Activated B cell treated with CpG ODN at 0.5 μM for 24 hours (primary cell): ENCODE measurements at regions of chr4 and their contacts with region 1.

Region 1: GRCh38 chr4:145936142-145936996 is 2.3 kb downstream of the ZNF827 start:
- DNase-seq: peak; percentile 57
- ATAC-seq: peak; percentile 49
- H3K4me3 Mint-ChIP-seq: peak overlapping the region; percentile 96
- H3K27ac Mint-ChIP-seq: peak overlapping the region; percentile 92
- H3K4me1 Mint-ChIP-seq: peaks cover 49% of the 10 kb centered on the region
- H3K27me3 Mint-ChIP-seq: no peaks in the 10 kb centered on the region
- CTCF ChIP-seq: no peak

Region 2: DNA sequence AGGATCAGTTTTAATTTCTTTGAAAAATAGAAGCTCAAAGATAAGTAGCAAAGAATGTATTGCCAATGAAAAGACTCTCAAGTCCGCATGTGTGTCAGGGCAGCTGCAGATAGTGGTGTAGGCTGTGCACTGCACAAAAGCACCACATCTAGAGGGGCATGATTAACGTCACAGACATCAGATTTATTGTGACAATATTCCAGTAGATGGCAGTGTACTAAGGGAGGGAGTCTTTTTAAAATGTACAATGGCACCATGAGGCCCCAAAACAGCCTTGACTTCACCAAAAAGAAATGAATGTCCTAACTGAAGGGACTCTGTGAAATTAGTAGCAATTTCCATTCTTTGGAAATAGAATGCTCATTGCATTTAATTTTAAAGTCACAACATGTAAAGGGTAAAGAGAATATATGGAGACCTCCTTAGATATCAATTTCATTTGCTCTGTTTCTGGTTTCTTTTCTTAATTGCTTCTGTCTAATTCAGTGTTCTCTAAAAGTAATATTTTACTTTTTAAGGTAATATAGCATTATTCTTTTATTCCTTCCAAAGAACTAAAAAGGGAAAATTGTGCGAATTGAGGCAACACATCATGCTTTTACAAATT is 96.1 kb before region 1 on chr4:
- CTCF ChIA-PET with region 1: no interaction called
- POLR2A ChIA-PET with region 1: no interaction called
- intact Hi-C with region 1: loop called (anchors 5 kb)
- DNase-seq: no peak
- ATAC-seq: peak; percentile 76
- H3K4me3 Mint-ChIP-seq: no peak overlapping the region
- H3K27ac Mint-ChIP-seq: no peak overlapping the region
- H3K4me1 Mint-ChIP-seq: peaks cover 11% of the 10 kb centered on the region
- H3K27me3 Mint-ChIP-seq: no peaks in the 10 kb centered on the region
- CTCF ChIP-seq: no peak

Region 3: GRCh38 chr4:145956288-145956890 is 20.0 kb after region 1 on chr4:
- CTCF ChIA-PET with region 1: interaction called, 4 read pairs
- POLR2A ChIA-PET with region 1: no interaction called
- intact Hi-C with region 1: loop called (anchors 1 kb)
- DNase-seq: no peak
- ATAC-seq: peak; percentile 77
- H3K4me3 Mint-ChIP-seq: no peak overlapping the region
- H3K27ac Mint-ChIP-seq: no peak overlapping the region
- H3K4me1 Mint-ChIP-seq: peaks cover 6% of the 10 kb centered on the region
- H3K27me3 Mint-ChIP-seq: no peaks in the 10 kb centered on the region
- CTCF ChIP-seq: peak; percentile 87

Region 4: GRCh38 chr4:146059865-146060264 is 123.5 kb after region 1 on chr4:
- CTCF ChIA-PET with region 1: no interaction called
- POLR2A ChIA-PET with region 1: interaction called, 10 read pairs
- intact Hi-C with region 1: loop called (anchors 1 kb)
- DNase-seq: peak; percentile 45
- ATAC-seq: peak; percentile 91
- H3K4me3 Mint-ChIP-seq: no peak overlapping the region
- H3K27ac Mint-ChIP-seq: no peak overlapping the region
- H3K4me1 Mint-ChIP-seq: peaks cover 39% of the 10 kb centered on the region
- H3K27me3 Mint-ChIP-seq: no peaks in the 10 kb centered on the region
- CTCF ChIP-seq: no peak

Region 5: DNA sequence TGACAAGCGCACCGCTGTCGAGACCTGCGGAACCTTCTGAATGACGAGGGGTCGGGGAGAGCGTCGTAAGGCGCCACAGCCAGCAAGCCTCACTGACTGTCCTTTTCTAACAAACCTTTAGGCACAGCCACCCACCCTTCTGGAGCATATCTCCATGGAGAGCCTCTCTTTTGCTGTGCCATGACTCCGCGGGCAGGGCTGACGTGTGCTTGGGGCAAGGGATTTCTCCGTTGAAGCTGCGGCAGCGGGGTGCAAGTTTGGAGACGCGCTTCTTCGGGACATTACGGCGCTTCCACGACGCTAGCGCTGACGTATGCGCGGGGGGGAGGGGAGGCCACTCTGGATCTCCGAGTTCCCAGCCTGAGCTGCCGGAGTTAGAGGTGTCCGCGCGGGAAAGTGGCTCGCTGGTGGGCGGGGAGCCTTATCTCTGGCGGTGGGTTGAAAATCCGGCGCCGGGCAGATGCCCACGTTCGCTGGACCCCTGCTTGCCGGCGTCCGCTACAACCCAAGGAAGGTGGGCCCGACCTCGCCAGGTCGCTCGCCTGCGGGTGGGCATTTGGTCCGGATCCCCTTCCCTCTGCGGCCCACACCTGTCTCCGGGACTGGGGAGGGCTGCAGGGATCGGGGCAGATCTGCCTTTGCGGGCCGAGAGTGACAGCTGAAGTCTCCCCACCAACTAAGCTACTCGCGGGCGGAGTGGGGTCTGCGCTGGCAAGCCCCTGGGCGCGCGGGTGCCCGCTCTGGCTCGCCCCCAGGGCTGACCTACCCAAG is 585.9 kb after region 1 on chr4:
- CTCF ChIA-PET with region 1: no interaction called
- POLR2A ChIA-PET with region 1: no interaction called
- intact Hi-C with region 1: loop called (anchors 5 kb)
- DNase-seq: peak; percentile 75
- ATAC-seq: peak; percentile 80
- H3K4me3 Mint-ChIP-seq: no peak overlapping the region
- H3K27ac Mint-ChIP-seq: no peak overlapping the region
- H3K4me1 Mint-ChIP-seq: peaks cover 21% of the 10 kb centered on the region
- H3K27me3 Mint-ChIP-seq: no peaks in the 10 kb centered on the region
- CTCF ChIP-seq: no peak

Region 6: DNA sequence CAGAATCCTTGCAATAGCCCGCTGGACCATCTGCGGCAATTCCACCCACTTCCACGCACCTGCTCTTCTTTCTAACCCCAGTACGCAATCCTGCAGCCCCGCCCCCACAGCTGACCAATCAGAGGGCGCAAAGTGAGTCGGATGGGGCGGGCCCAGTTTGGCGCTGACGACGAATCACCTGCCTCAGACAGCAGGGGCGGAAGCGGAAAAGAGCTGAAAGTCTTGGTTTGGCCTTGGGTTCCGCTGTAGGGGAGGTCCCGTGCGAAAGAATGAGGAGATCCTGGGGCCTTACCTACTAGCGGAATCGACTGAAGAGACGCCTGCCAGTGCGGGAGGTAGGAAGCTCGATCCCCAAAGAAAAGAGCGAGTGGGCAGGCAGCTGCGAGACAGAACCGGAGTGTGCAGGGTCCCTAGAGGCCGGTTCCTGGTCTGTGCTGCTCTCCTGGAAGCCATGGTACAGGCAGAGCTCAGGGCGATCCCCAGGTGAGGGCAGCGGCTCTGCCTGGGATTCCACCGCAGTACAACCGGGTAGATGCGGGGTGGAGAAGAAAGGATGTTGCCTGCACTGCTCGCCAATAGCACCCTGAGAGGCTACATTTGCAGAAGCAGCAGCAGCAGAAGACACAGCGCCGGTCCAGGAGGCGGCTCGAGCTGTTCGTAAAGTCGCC is 1680.9 kb after region 1 on chr4 and contains the start of gene TMEM184C:
- CTCF ChIA-PET with region 1: no interaction called
- POLR2A ChIA-PET with region 1: no interaction called
- intact Hi-C with region 1: loop called (anchors 10 kb)
- DNase-seq: peak; percentile 97
- ATAC-seq: peak; percentile 97
- H3K4me3 Mint-ChIP-seq: peak within 1 kb of the TSS; percentile 98
- H3K27ac Mint-ChIP-seq: peak within 1 kb of the TSS; percentile 96
- H3K4me1 Mint-ChIP-seq: peaks cover 44% of the 10 kb centered on the region
- H3K27me3 Mint-ChIP-seq: peaks cover 2% of the 10 kb centered on the region
- CTCF ChIP-seq: no peak
- total RNA-seq, gene TMEM184C: 25.0 and 27.9 TPM in 2 replicates